ENCODE measurements at regions of chr1 and their contacts with region 1.

Region 1: DNA sequence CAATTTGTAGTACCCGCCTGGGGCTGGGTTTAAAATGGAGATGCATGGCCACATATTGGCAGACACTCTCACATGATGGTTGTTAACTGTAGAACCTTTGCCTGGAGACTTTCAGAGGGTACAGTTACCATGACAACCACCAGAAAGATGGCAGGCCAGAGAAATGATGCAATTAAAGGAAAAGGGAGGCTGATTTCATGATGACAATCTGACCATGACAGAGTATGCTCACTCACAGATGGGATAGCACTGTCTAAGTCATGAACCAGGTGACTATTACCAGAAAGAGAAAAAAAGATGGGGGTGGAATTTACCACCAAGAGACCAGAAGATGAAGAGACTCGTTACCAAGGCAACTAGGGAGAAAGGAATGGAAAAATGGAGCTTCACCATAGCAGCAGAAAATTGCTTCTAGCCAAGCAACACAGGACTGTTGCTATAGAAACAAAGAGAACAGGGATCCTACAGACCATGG is 3.5 kb upstream of the TRIT1 start:
- DNase-seq: no peak
- H3K4me3 Mint-ChIP-seq: no peak overlapping the region
- H3K27ac Mint-ChIP-seq: no peak overlapping the region
- H3K4me1 Mint-ChIP-seq: peaks cover 11% of the 10 kb centered on the region
- H3K27me3 Mint-ChIP-seq: peaks cover 15% of the 10 kb centered on the region

Region 2: DNA sequence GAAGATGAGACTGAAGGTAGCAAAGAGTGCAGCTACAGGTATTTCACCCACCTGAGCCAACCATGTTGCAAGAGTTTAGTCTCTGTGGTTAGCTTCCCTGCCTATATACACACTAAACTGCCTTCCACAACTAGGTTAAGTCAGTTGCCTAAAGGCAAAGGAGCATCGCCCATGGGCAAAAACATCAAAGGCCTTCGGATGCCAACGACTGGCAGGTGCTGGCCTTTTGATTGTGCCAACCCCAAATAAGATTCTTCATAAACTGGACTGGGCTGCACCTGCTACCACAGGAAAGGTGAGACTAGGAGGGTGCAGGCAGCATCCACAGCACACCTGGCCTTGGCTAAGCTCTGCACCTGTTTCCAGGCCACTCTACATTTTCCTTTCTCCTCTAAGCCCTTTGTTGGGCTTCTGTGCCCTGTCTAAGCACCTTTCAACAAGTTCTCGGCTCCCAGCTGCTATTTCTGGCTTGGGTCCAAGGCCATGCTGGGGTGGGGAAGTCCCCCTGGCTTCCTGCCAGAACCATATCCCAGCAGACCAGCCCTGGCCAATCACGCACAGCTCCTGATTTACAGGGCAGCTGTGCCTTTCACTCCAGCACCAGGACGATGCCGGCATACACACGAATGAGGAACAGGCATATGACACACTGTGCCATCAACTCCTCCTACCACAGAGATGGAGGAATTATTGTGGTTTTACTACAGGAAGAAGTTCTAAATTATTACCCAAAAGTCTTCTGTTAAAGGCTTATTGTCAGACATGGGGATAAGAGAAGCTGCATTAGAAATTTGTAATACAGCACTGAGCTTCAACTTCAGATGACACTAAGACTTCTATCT is 41.3 kb before region 1 on chr1:
- intact Hi-C with region 1: loop called (anchors 1 kb)
- DNase-seq: peak; percentile 59
- H3K4me3 Mint-ChIP-seq: peak overlapping the region; percentile 12
- H3K27ac Mint-ChIP-seq: peak overlapping the region; percentile 67
- H3K4me1 Mint-ChIP-seq: peaks cover 41% of the 10 kb centered on the region
- H3K27me3 Mint-ChIP-seq: no peaks in the 10 kb centered on the region

Region 3: GRCh38 chr1:39954816-39955546 is 68.2 kb after region 1 on chr1 and contains the start of gene MFSD2A:
- intact Hi-C with region 1: loop called (anchors 1 kb)
- DNase-seq: peak; percentile 80
- H3K4me3 Mint-ChIP-seq: peak within 1 kb of the TSS; percentile 98
- H3K27ac Mint-ChIP-seq: peak within 1 kb of the TSS; percentile 94
- H3K4me1 Mint-ChIP-seq: peaks cover 49% of the 10 kb centered on the region
- H3K27me3 Mint-ChIP-seq: no peaks in the 10 kb centered on the region
- total RNA-seq, gene MFSD2A: 55.3 and 56.2 TPM in 2 replicates

Measured in activated T-helper 1 cell treated with anti-CD3 and anti-CD28 coated beads, Interleukin-12 subunit alpha, Interleukin-12 subunit beta, Interleukin-2, Interleukin-4 antibody, amounts not matched to agents 30 ng/mL and 10 ng/mL and 1 ng/mL, durations not matched to agents 14 hours and 24 hours and 36 hours (primary cell).